ENCODE measurements at regions of chr3 and their contacts with region 1.

Region 1: DNA sequence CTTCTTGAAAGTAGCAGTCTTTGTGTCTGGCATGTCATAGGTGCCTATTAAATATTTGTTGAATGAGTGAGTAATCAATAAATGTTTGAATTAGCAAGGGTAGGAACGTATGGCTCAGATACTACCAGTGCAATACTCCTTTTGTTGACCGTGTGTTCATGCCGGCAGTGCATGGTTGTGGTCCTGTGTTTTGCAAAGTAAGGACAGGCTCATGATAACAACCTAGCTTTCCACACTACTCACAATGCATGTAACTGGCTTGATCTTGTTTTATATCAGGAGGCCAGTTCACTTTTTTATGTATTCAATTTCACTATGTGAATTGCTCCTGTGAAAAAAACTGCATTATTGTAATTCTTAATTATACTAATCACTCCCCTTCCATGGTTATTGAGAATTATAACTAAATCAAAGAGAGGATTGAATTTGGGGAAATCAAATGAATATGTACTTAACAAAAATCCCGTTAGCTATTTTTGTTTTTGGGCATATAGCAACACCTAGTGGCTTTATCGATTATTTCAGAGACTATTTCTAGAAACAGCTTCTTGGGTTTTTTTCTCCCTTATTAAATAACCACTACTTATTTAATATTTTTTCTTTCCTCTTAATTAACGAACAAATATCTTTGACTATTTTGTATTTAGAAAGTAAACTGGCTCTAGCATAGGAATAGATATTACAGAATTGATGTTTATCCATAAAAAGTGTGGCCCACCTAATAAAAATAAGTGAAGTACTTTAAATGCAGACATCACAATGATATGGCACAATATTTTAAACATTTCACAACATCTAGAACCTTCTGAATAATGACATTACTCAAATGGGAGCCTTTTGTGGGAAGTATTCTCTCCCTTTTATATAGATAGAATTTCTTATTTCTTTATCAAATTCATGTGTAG is 218.5 kb downstream of the BBX start:
- DNase-seq: no peak
- ATAC-seq: no peak
- H3K4me3 Mint-ChIP-seq: no peak overlapping the region
- H3K27ac Mint-ChIP-seq: no peak overlapping the region
- H3K4me1 Mint-ChIP-seq: no peaks in the 10 kb centered on the region
- H3K27me3 Mint-ChIP-seq: no peaks in the 10 kb centered on the region

Region 2: DNA sequence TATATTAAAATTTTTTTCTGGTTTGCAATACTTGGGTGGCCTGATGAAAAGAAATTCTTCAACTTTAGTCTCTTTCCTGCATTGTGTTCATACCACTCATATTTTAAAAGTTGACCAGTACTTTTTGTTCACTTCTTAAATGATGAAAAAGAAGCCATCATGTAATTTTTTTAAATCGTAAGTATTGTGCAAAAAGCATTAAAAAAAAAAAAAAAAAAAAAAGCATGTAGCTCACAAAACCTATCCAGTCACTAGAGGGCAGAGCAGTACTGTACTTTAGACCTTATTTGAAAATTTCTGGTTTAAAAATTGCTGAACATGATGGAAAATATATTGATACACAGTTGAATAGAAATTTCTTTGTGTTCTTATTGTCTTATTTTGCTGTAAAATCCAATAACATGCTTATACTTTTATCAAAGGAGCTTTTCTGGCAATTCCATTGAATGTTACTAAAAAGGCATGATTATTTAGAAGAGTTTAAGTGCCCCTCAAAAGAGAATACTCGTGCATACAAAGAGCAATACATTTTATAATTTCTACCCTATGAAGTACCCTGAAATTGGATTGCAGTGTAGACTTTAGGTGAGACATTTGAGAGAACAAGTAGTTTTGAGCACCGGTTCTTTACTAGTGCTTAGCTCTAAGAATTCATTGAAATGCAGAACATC is 80.8 kb before region 1 on chr3:
- CTCF ChIA-PET with region 1: no interaction called
- DNase-seq: no peak
- ATAC-seq: no peak
- H3K4me3 Mint-ChIP-seq: no peak overlapping the region
- H3K27ac Mint-ChIP-seq: no peak overlapping the region
- H3K4me1 Mint-ChIP-seq: peaks cover 14% of the 10 kb centered on the region
- H3K27me3 Mint-ChIP-seq: no peaks in the 10 kb centered on the region

Region 3: DNA sequence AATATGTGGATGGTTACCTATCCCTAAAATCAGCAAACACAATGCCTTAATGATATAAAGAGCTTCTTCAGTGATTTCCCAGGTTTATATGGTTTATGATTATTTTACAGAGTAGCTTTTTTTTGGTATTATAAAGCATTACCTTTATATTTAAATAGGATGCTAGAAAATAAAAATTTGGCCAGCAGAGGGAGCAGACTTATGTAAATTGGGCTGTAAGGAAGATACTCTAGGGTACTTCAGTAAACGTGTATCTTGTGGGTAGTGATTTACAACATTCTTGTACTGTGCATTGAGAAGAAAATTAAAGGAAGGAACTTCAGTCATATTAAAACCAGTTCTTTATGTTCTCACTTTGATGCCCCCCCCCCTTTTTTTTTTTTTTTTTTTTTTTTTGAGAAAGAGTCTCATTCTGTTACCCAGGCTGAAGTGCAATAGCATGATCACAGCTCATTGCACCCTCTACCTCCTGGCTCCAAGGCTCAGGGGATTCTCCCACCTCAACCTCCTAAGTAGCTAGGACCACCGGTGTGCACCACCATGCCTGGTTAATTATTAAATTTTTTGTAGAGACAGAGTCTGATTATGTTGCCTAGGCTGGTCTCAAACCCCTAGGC is 50.6 kb before region 1 on chr3:
- CTCF ChIA-PET with region 1: interaction called, 10 read pairs
- DNase-seq: no peak
- ATAC-seq: peak; percentile 23
- H3K4me3 Mint-ChIP-seq: no peak overlapping the region
- H3K27ac Mint-ChIP-seq: no peak overlapping the region
- H3K4me1 Mint-ChIP-seq: no peaks in the 10 kb centered on the region
- H3K27me3 Mint-ChIP-seq: no peaks in the 10 kb centered on the region

Region 4: GRCh38 chr3:107753480-107753879 is 12.2 kb after region 1 on chr3:
- CTCF ChIA-PET with region 1: interaction called, 10 read pairs
- DNase-seq: peak; percentile 51
- ATAC-seq: no peak
- H3K4me3 Mint-ChIP-seq: no peak overlapping the region
- H3K27ac Mint-ChIP-seq: no peak overlapping the region
- H3K4me1 Mint-ChIP-seq: no peaks in the 10 kb centered on the region
- H3K27me3 Mint-ChIP-seq: no peaks in the 10 kb centered on the region

Region 5: DNA sequence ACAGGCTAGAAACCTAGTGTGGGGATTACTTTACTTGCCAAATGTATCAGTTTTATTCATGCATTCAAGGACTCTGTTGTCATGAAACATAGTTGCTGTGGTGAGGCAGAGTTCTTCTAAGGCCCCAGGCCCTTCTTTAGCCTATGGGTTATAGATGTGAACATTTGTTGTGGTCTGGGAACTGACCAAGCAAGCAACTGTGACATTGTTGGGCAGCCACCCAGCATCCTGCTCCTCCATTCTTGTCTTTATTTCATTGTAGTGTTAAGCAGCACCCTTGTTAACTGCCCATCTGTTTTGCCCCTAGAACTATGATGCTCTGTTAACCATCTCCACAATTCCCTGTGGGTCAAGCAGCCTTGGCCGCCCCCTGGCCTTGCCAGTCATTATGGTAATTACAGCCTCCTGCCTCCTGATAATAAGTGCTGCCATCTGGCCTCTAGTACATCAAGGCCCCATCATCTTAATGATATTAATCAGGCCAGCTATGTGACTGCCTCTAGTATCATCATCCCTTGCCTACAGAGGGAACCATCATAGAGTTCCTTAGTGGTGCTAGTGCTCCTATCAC is 493.2 kb after region 1 on chr3:
- CTCF ChIA-PET with region 1: no interaction called
- DNase-seq: no peak
- ATAC-seq: no peak
- H3K4me3 Mint-ChIP-seq: no peak overlapping the region
- H3K27ac Mint-ChIP-seq: no peak overlapping the region
- H3K4me1 Mint-ChIP-seq: no peaks in the 10 kb centered on the region
- H3K27me3 Mint-ChIP-seq: no peaks in the 10 kb centered on the region